CD4-positive, alpha-beta memory T cell (primary cell): ENCODE measurements at regions of chr3 and their contacts with region 1.

Region 1: DNA sequence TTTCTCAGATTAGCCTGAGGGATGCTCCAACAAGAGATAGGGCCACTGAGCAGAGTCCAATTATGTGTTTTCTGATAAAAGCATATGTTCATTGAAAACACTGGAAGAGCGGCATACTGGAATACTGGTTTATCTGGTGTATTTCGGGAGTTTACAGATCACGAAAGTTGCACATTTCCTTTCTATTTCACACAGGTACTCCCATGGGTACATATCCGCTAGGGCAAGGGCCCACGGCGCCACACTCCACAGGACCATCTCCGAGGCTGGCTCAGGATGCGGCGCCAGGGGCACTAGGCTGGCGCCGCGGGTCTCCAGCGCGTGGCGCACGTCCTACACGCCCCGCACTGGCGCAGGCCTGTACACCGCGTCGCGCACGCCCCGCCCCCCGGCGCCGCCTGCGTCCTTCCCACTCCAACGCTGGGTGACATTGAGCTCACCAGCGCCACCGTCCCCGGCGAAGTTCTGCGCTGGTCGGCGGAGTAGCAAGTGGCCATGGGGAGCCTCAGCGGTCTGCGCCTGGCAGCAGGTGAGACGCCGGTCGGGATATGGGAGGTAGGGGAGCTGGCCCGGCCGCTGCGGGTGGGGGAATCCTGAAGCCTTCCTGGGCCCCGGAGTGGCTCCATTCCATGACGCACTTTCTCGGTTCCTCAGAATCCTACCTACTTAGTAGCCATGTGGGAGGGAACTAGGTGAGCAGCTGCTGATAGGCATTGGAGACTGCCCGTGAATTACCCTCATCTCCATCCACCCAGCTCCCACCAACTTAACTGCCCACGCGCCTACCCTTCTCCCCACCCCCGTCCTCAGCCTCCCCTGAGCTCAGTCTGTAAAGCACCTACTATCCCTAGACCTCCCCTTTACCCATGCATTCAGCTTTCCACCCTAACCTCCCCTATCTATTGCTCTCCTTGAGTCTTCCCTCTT is at the start of gene FAM162A:
- DNase-seq: peak; percentile 92 to 93 (median 93)
- H3K4me3 ChIP-seq: peak within 1 kb of the TSS; percentile 72 to 84
- H3K4me3 Mint-ChIP-seq: peak within 1 kb of the TSS; percentile 89 to 96 (median 94)
- H3K27ac ChIP-seq: peak within 1 kb of the TSS; percentile 76
- H3K27ac Mint-ChIP-seq: peak within 1 kb of the TSS; percentile 93 to 98 (median 95)
- H3K4me1 ChIP-seq: peaks cover 31% of the 10 kb centered on the region
- H3K4me1 Mint-ChIP-seq: peaks cover 21 to 51% (median 36%) of the 10 kb centered on the region in 4 donors
- H3K27me3 ChIP-seq: no peaks in the 10 kb centered on the region
- H3K27me3 Mint-ChIP-seq: no peaks in the 10 kb centered on the region
- total RNA-seq, gene FAM162A: 31.1 to 32.8 TPM

Region 2: GRCh38 chr3:121749276-121750086 is 634.6 kb before region 1 on chr3 and contains the start of gene GOLGB1:
- CTCF ChIA-PET with region 1: no interaction called
- POLR2A ChIA-PET with region 1: interaction called, 4 read pairs
- intact Hi-C with region 1: loop called (anchors 1 kb)
- DNase-seq: peak; percentile 93 to 98 (median 97)
- H3K4me3 ChIP-seq: peak within 1 kb of the TSS; percentile 75 to 86
- H3K4me3 Mint-ChIP-seq: peak within 1 kb of the TSS in 2 of 8 donors; percentile 17 to 44
- H3K27ac ChIP-seq: peak within 1 kb of the TSS; percentile 99
- H3K27ac Mint-ChIP-seq: no peak within 1 kb of the TSS
- H3K4me1 ChIP-seq: peaks cover 34% of the 10 kb centered on the region
- H3K4me1 Mint-ChIP-seq: peaks cover 8 to 10% (median 9%) of the 10 kb centered on the region in 4 donors
- H3K27me3 ChIP-seq: no peaks in the 10 kb centered on the region
- H3K27me3 Mint-ChIP-seq: peaks cover 6 to 7% of the 10 kb centered on the region in 2 donors
- total RNA-seq, gene GOLGB1: 45.7 to 49.3 TPM

Region 3: DNA sequence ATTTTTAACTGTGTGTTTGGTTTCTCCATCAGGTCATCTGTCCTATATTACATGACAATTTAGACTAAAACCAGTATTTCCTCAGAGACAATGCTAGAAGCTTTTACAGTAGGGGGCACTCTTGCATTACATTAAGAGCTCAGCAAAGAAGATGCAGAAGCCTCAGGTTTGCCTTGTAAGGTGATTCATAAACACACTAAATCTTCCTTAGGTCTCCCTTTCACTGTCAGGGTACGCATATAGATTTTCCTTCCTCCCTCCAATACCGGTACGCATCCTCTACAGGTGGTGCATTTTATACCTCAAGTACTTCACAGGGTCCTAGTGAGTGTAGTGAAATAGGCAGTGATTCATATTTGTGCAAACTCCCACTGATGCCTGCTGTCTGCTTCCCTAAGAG is 282.4 kb before region 1 on chr3:
- CTCF ChIA-PET with region 1: interaction called, 4 read pairs
- POLR2A ChIA-PET with region 1: no interaction called
- intact Hi-C with region 1: loop called (anchors 1 kb)
- DNase-seq: peak in 4 of 5 donors; percentile 58 to 67 (median 60)
- H3K4me3 ChIP-seq: no peak overlapping the region
- H3K4me3 Mint-ChIP-seq: peak overlapping the region in 1 of 8 donors; percentile 37
- H3K27ac ChIP-seq: no peak overlapping the region
- H3K27ac Mint-ChIP-seq: no peak overlapping the region
- H3K4me1 ChIP-seq: peaks cover 7% of the 10 kb centered on the region
- H3K4me1 Mint-ChIP-seq: peaks cover 8 to 18% (median 9%) of the 10 kb centered on the region in 4 donors
- H3K27me3 ChIP-seq: peaks cover 8% of the 10 kb centered on the region
- H3K27me3 Mint-ChIP-seq: no peaks in the 10 kb centered on the region

Region 4: GRCh38 chr3:122245513-122246174 is 138.4 kb before region 1 on chr3:
- CTCF ChIA-PET with region 1: no interaction called
- POLR2A ChIA-PET with region 1: no interaction called
- intact Hi-C with region 1: no loop called
- DNase-seq: no peak
- H3K4me3 ChIP-seq: peak overlapping the region in 1 of 2 donors; percentile 38
- H3K4me3 Mint-ChIP-seq: peak overlapping the region; percentile 17 to 84 (median 74)
- H3K27ac ChIP-seq: no peak overlapping the region
- H3K27ac Mint-ChIP-seq: peak overlapping the region in 2 of 7 donors; percentile 65 to 77
- H3K4me1 ChIP-seq: peaks cover 6% of the 10 kb centered on the region
- H3K4me1 Mint-ChIP-seq: peaks cover 3 to 17% (median 7%) of the 10 kb centered on the region in 4 donors
- H3K27me3 ChIP-seq: no peaks in the 10 kb centered on the region
- H3K27me3 Mint-ChIP-seq: peaks cover 2 to 3% of the 10 kb centered on the region in 2 donors

Region 5: DNA sequence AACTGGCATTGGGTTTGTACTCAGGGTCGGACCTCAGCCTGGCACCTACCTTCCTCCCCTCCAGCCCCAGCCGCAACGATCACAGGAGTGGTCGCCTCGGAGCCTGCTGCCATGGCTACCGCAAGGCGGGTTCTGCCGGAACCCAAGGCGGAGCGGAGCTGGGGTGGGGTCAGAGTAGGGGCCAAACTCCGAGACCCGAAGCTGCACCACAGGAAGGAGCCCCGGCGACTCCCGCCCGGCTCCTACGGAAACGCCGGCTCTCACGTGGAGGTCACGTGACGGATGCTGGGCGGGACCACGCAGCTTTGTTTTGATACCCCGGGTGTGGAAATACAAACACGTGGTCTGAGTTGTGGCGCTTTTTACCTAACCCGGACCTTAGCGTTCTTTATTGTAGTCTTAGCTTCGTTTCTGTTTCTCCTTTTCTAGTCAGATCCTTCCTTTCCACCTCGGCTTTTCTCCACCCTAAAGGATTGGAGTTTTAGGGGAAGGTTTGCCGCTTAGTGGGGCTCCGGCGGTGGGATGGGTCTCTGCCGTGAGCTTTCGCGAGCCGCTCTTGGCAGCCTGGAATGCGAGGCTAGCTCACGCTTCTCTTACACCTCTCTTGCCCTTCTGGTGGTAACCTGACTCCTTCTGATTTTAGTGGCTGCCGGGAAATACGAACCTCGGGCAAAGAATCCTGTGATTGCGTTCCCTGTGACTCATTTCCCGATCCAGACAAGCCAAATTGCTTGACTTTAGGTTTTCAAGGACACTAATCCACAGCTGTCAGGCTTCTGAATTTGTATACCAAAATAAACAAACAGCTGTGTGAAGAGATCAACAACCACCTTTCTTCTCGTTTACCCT is 409.8 kb after region 1 on chr3 and contains the start of gene HSPBAP1:
- CTCF ChIA-PET with region 1: interaction called, 6 read pairs
- POLR2A ChIA-PET with region 1: interaction called, 10 read pairs
- intact Hi-C with region 1: loop called (anchors 1 kb)
- DNase-seq: peak; percentile 85 to 91 (median 87)
- H3K4me3 ChIP-seq: peak within 1 kb of the TSS; percentile 78 to 83
- H3K4me3 Mint-ChIP-seq: peak within 1 kb of the TSS in 6 of 8 donors; percentile 91 to 97 (median 94)
- H3K27ac ChIP-seq: peak within 1 kb of the TSS; percentile 74
- H3K27ac Mint-ChIP-seq: peak within 1 kb of the TSS in 5 of 7 donors; percentile 95 to 98 (median 97)
- H3K4me1 ChIP-seq: peaks cover 54% of the 10 kb centered on the region
- H3K4me1 Mint-ChIP-seq: peaks cover 25 to 32% (median 29%) of the 10 kb centered on the region in 4 donors
- H3K27me3 ChIP-seq: no peaks in the 10 kb centered on the region
- H3K27me3 Mint-ChIP-seq: no peaks in the 10 kb centered on the region
- total RNA-seq, gene HSPBAP1: 22.9 to 23.2 TPM

Region 6: DNA sequence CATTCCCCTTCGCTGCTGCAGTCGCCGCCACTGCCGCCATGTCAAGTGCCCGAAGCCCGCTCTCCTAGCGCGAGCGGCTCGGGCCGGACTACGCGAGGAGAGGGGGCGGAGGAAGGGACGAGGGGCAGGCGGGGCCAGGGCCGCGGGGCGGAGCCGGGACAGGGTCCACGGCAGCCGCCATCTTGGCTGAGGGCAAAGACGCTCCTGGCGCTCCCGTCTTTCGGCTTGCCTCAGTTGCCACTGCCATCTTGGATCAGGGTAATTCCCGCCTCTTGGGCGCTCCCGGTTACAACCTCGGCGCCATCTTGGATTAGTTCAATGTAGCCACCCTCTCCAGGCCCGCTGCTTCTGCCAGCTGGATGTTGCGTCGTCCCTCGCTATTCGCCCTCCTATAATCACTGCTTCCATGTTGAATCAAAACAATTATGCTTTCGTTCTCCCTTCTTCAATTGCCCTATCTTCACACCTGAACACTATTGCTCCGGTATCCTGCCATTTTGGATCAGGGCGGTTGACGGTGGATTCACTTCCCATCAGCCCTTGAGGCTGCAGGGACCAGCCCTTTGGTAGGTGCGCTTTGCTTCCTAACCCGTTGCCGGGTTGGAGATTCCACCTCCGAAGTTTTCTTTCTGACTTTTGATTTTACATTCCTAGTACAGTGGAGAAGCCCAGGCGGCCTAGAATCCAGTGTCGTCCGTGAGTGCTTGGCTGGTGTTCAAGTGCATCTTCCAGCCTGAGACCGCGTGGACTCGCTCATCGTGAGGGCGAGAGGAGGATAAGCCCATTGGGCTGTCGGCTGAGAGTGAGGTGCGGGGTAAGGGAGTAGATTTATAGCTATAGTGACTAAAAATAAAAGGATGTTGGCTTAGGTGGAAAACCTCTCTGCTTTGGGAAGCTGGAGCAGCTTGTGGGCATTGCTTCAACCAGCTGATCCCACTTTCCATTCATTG is 1201.2 kb after region 1 on chr3 and contains the start of gene HACD2:
- CTCF ChIA-PET with region 1: no interaction called
- POLR2A ChIA-PET with region 1: no interaction called
- intact Hi-C with region 1: loop called (anchors 1 kb)
- DNase-seq: peak; percentile 90 to 96 (median 92)
- H3K4me3 ChIP-seq: peak within 1 kb of the TSS; percentile 80 to 99
- H3K4me3 Mint-ChIP-seq: peak within 1 kb of the TSS in 5 of 8 donors; percentile 88 to 93 (median 92)
- H3K27ac ChIP-seq: peak within 1 kb of the TSS; percentile 78
- H3K27ac Mint-ChIP-seq: peak within 1 kb of the TSS in 6 of 7 donors; percentile 76 to 94 (median 87)
- H3K4me1 ChIP-seq: peaks cover 38% of the 10 kb centered on the region
- H3K4me1 Mint-ChIP-seq: peaks cover 20 to 28% (median 22%) of the 10 kb centered on the region in 4 donors
- H3K27me3 ChIP-seq: no peaks in the 10 kb centered on the region
- H3K27me3 Mint-ChIP-seq: no peaks in the 10 kb centered on the region
- total RNA-seq, gene HACD2: 26.0 to 29.5 TPM